SK-N-SH (cell line): ENCODE measurements at regions of chr7 and their contacts with region 1.

Region 1: DNA sequence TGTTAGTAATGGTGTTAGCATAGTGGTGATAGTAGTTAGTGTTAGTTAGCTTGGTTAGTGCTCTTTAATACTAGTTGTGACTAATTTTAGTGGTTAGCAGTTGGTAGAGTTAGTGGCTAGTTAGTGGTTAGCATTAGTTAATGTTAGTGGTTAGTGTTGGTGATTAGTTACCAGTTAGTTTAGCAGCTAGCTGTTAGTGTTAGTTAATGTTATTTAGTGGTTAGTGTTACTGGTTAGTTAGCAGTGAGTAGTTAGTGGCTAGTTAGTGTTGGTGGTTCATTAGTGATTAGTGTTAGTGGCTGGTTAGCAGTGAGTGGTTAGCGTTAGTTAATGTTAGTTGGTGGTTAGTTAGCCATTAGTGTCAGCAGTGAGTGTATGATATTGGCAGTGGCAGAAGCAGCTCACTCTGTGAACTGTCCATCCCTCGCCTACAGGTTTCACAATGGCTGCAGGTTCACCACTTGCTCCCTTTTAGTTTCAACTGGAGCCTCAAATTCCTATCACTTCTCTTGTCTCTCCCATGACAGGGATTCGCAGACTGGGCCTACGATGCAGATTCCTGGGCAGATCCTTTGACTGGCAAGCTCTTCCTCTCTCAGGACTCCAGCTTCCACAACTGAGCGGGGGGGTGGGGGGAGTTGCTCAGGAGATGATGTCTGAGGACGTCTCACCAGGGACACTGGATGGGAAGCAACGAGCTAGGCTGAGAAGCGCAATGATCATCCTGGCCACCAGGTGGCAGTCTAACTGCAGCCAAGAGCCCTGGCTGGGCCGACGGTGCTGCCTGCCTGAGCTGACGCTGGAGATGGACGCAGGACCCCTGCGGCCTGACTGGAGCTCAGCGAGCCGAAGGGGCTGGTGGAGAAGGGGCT is 19.5 kb downstream of the GHRHR start:
- DNase-seq: peak; percentile 94
- H3K4me3 ChIP-seq: peak overlapping the region in 1 of 2 experiments; percentile 8; a peak in 1 of 4 replicates
- H3K27ac ChIP-seq: no peak overlapping the region
- H3K4me1 ChIP-seq: peaks cover 0 to 7% of the 10 kb centered on the region in 2 experiments; a peak in 1 of 4 replicates
- H3K27me3 ChIP-seq: peaks cover 20% of the 10 kb centered on the region; the same call in 1 of the 2 replicates
- CTCF ChIP-seq: peak; percentile 97
- EP300 ChIP-seq: no peak
- RAD21 ChIP-seq: peak; percentile 100

Region 2: GRCh38 chr7:30493228-30493627 is 490.1 kb before region 1 on chr7:
- CTCF ChIA-PET with region 1: no interaction called
- POLR2A ChIA-PET with region 1: no interaction called
- DNase-seq: no peak
- H3K4me3 ChIP-seq: no peak overlapping the region
- H3K27ac ChIP-seq: no peak overlapping the region
- H3K4me1 ChIP-seq: no peaks in the 10 kb centered on the region
- H3K27me3 ChIP-seq: no peaks in the 10 kb centered on the region
- CTCF ChIP-seq: no peak
- EP300 ChIP-seq: no peak
- RAD21 ChIP-seq: no peak

Region 3: GRCh38 chr7:30717181-30717580 is 266.1 kb before region 1 on chr7:
- CTCF ChIA-PET with region 1: no interaction called
- POLR2A ChIA-PET with region 1: no interaction called
- DNase-seq: no peak
- H3K4me3 ChIP-seq: no peak overlapping the region
- H3K27ac ChIP-seq: no peak overlapping the region
- H3K4me1 ChIP-seq: no peaks in the 10 kb centered on the region
- H3K27me3 ChIP-seq: no peaks in the 10 kb centered on the region
- CTCF ChIP-seq: no peak
- EP300 ChIP-seq: no peak
- RAD21 ChIP-seq: no peak

Region 4: DNA sequence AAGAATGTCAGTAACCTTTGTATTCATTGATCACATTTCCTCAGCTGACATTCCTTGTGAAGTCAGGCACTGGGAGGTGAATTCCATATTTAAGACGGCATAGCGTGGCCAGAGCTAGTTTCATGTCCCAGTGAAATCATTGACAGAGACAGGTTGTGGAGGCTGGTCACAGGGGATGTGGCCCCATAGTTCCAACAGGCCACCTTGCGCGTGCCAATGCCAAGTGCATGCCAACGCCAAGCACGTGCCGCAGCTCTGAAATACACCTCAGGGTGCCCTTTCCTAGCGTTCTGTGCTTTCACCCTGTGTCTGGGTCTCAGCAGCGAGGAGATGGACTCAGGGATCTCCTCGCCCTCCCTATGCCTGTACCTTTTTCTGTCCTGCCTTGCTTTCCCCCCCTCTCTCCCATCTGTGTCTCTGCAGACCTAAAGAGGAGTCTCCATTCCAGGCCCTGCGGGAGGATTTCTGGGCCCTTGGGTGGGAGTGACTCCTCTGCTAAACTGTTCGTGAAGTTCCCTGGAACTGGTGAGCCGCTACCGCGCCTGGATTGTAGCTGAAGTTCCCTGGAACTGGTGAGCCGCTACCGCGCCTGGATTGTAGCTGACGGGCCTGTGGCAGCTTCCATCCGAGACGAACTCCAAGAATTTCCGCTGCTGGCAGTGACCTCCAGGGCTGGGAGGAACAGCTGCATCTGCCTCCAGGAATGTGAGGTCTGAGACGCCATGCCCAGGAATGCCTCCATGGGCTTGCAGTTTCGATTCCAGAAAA is 51.9 kb before region 1 on chr7:
- CTCF ChIA-PET with region 1: interaction called, 18 read pairs
- POLR2A ChIA-PET with region 1: no interaction called
- DNase-seq: peak; percentile 22
- H3K4me3 ChIP-seq: no peak overlapping the region
- H3K27ac ChIP-seq: peak overlapping the region in 1 of 2 experiments; percentile 1; a peak in 1 of 4 replicates
- H3K4me1 ChIP-seq: peaks cover 0 to 28% of the 10 kb centered on the region in 2 experiments; a peak in 1 of 4 replicates
- H3K27me3 ChIP-seq: no peaks in the 10 kb centered on the region
- CTCF ChIP-seq: no peak
- EP300 ChIP-seq: no peak
- RAD21 ChIP-seq: no peak

Region 5: GRCh38 chr7:30996256-30996655 is 13.0 kb after region 1 on chr7:
- CTCF ChIA-PET with region 1: interaction called, 38 read pairs
- POLR2A ChIA-PET with region 1: no interaction called
- DNase-seq: no peak
- H3K4me3 ChIP-seq: no peak overlapping the region
- H3K27ac ChIP-seq: no peak overlapping the region
- H3K4me1 ChIP-seq: no peaks in the 10 kb centered on the region; a peak in 1 of 4 replicates
- H3K27me3 ChIP-seq: no peaks in the 10 kb centered on the region
- CTCF ChIP-seq: no peak
- EP300 ChIP-seq: no peak
- RAD21 ChIP-seq: no peak

Region 6: DNA sequence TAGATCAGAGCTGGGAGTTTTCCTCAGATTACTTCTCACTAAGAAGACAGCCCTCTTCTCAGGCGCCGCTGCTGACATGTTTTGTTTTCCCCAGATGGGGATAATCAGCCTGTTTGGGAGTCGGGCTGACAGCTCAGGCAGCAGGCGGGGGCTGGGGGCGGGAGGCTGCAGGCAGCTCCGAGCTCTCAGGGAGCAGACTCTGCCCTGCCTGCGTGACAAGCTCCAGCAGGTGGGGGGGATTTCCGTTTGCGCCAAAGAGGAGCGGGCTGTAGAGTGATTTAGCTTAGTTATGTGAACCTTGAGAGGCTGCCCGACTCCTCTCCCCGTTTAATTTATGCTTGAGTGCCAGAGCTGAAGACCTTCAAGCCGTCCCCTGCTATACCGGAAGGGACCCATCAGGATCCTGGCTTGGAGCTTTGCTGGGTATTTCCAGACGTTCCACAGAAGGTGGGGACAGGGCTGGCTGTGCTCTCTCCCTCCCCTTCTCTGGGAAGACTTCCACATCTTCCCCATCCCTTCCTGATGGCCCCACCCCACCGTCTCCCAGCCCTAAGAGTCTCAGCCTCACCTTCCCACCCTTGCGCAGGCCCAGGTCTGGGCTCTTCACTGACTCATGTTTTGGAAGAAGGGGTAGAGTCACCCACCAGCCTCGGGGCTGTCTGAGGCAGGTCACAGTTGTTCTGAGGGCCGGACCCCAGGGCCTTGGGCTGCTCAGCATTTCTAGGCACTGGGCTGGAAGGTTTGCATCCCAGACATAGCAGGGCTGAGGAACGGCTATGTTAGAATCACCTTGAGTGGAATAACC is 44.1 kb after region 1 on chr7:
- CTCF ChIA-PET with region 1: interaction called, 12 read pairs
- POLR2A ChIA-PET with region 1: no interaction called
- DNase-seq: peak; percentile 79
- H3K4me3 ChIP-seq: no peak overlapping the region
- H3K27ac ChIP-seq: no peak overlapping the region
- H3K4me1 ChIP-seq: peaks cover 0 to 23% of the 10 kb centered on the region in 2 experiments; a peak in 2 of 4 replicates
- H3K27me3 ChIP-seq: peaks cover 17% of the 10 kb centered on the region
- CTCF ChIP-seq: no peak
- EP300 ChIP-seq: no peak
- RAD21 ChIP-seq: no peak

Region 7: GRCh38 chr7:31043051-31043471 is 59.8 kb after region 1 on chr7:
- CTCF ChIA-PET with region 1: interaction called, 100 read pairs
- POLR2A ChIA-PET with region 1: interaction called, 5 read pairs
- DNase-seq: peak; percentile 85
- H3K4me3 ChIP-seq: no peak overlapping the region
- H3K27ac ChIP-seq: peak overlapping the region in 1 of 2 experiments; percentile 87; a peak in 2 of 4 replicates
- H3K4me1 ChIP-seq: peaks cover 0 to 36% of the 10 kb centered on the region in 2 experiments; a peak in 2 of 4 replicates
- H3K27me3 ChIP-seq: peaks cover 29% of the 10 kb centered on the region
- CTCF ChIP-seq: no peak
- EP300 ChIP-seq: no peak; a peak in 1 of 4 replicates
- RAD21 ChIP-seq: no peak; the same call in 1 of the 2 replicates

Region 8: GRCh38 chr7:31058122-31058521 is 74.8 kb after region 1 on chr7:
- CTCF ChIA-PET with region 1: interaction called, 56 read pairs
- POLR2A ChIA-PET with region 1: no interaction called
- DNase-seq: no peak
- H3K4me3 ChIP-seq: no peak overlapping the region
- H3K27ac ChIP-seq: no peak overlapping the region
- H3K4me1 ChIP-seq: peaks cover 0 to 28% of the 10 kb centered on the region in 2 experiments; a peak in 1 of 4 replicates
- H3K27me3 ChIP-seq: peaks cover 18% of the 10 kb centered on the region
- CTCF ChIP-seq: no peak
- EP300 ChIP-seq: no peak
- RAD21 ChIP-seq: no peak

Region 9: DNA sequence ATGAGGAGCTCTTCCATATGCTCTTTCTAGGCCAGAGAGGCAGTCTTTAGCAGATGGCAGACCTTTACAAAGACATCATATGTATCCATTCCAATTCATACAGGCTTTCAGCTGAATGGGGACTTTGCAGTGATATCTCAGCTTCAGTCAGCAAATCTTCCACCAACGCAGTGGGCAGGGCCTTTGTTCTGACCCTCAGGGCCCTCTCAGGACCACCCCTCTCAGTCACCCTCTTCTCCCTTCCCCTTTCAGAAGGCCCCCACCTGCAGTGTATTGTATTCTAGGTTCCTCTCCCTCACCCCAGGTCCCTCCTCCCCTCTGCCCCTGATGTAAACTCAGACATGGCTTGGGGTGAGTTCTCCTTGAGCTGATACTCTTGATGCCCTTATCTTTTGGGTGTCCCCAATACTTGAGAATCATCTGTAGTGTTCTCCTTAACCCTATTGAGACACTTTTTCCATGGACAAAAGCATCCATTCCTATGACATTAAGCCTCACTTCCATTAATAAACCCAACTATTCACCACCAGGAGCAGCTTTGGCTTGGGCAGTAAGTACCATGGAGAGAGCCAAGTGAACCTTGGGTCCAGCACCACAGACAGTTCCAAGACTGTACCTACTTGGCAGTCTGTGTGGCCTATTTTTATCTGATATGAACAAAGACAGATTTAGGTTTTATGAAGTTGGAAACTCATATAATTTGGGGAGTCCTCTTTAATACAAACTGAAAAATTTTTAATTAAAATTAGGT is 131.5 kb after region 1 on chr7:
- CTCF ChIA-PET with region 1: interaction called, 1,191 read pairs
- POLR2A ChIA-PET with region 1: no interaction called
- DNase-seq: no peak
- H3K4me3 ChIP-seq: no peak overlapping the region
- H3K27ac ChIP-seq: no peak overlapping the region
- H3K4me1 ChIP-seq: peaks cover 0 to 3% of the 10 kb centered on the region in 2 experiments; a peak in 2 of 4 replicates
- H3K27me3 ChIP-seq: peaks cover 1% of the 10 kb centered on the region
- CTCF ChIP-seq: 0 out of 2 replicates have a peak, but pooled peaks have one; percentile 12
- EP300 ChIP-seq: no peak
- RAD21 ChIP-seq: no peak